RWPE1 (cell line): ENCODE measurements at regions of chr2 and their contacts with region 1.

Region 1: GRCh38 chr2:131673392-131674173 is 145.9 kb downstream of the CCDC74A start:
- DNase-seq: peak; percentile 58
- H3K27ac ChIP-seq: peak overlapping the region; percentile 76
- CTCF ChIP-seq: peak; percentile 88

Region 2: DNA sequence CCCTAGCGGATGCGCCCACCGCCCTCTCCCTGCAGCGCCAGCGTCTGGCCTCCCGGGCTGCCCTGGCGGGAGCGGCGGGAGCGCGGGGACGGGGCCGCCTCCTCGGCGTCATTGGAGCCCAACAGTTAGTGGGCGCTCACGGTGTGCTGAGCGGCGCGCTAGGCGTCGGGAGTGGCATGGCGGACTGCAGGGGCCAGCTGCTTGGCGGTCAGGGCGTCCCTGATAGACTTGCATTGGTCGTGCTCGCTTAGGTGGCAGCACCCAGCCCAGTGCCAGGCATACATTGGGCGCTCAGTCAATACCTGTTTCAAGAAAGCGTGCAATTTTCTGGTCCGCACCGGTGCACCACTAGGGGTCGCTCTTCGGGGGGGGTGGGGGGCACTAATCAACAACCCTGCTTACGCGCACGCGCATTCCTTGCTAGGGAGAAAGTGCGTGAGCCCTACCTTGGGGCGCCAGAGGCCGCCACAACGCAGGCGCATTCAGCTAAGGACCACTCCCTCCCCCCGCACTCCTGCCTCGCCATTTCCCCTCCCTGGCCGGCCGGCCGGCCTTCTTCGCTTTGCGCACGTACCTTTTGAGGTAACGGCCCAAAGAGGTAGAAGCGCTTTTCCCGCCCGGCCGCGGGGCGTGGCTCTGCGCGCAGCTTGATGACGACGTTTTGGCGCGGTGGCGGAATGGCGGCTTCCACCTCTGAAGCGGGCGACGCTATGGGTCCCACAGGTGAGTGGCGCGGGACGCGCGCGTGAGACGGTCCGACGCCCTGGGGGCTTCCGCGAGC is 181.0 kb before region 1 on chr2:
- CTCF ChIA-PET with region 1: interaction called, 11 read pairs
- POLR2A ChIA-PET with region 1: no interaction called
- DNase-seq: peak; percentile 99
- H3K27ac ChIP-seq: peak overlapping the region; percentile 86
- CTCF ChIP-seq: peak; percentile 88

Region 3: DNA sequence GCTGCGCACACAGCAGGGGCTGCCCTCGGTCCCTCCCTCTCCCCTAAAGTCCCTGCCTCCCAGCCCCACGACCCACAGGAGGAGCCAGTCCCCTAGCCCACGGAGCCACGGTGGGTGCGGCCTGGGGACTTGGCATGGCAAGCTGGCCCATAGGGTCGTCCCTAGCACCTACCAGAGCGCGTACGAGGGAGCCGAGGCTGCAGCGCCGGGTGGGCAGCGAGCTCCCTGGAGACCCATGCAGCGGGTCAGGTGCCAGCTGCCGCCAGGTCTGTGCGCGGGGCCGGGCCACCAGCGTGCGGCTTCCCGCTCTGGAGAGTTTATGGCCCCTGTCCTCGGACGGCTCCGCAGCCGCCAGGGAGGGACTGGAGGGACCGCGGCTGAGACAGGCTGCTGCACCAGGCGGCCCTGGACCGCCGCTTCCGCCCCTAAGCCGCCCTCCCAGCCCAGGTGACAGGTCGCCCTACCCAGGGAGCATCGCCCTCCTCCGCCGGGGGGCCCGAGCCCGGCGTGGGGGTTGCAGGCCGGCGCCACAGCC is 127.7 kb after region 1 on chr2:
- CTCF ChIA-PET with region 1: interaction called, 18 read pairs
- POLR2A ChIA-PET with region 1: no interaction called
- DNase-seq: no peak
- H3K27ac ChIP-seq: no peak overlapping the region
- CTCF ChIP-seq: no peak